ENCODE measurements at regions of chr18 and their contacts with region 1.

Region 1: DNA sequence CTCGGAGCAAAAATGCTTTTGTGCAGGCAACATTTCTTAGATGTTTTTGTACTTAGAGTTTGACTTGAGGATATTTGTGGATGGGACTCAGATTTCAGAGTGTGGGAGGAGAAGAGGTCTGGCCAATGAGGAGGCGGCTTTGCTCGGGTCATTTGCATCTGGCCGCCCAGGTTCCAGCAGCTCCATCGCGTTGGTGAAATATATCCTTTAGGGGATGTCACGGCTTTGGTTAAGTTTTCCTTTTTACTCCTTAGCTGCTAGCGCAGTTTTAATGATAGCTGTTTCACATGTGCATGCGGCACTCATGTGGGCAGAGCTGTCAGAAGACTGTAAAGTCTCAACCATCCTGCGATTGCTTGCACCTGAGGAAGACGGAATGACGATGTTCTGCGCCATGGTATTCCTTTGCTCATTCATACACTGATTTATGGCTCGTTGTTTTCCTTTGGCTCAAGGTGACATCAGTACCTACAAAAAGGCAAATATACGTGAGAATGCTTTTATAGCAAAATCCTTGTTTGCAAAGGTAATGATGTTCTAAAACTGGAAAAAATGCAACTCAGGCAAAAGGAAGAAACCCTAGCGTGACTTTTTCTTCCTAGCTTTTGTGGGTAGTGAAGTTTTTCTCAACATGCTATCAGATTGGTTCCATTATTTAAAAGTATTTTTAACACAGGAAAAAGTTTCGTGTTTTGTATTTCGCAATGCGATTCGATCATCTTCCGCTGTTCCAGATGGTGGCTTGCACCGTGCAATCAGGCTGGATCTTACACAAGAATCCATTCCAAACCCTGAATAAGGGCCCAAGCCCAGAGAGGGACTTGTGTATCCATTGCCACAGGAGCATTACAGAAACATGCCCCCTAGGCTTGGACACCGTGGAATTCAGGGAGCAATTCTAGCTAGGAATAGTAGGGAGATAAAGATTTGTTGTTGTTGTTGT is 70.5 kb upstream of the ZNF516 start:
- DNase-seq: peak; percentile 80 to 95
- H3K4me3 ChIP-seq: no peak overlapping the region
- CTCF ChIP-seq: no peak
- POLR2A ChIP-seq: no peak

Region 2: GRCh38 chr18:76610933-76611749 is 45.6 kb after region 1 on chr18:
- intact Hi-C with region 1: loop called (anchors 5 kb)
- DNase-seq: no peak
- H3K4me3 ChIP-seq: no peak overlapping the region
- CTCF ChIP-seq: no peak
- POLR2A ChIP-seq: no peak